Lower lobe of right lung (tissue), 2 donors: ENCODE measurements at regions of chr9 and their contacts with region 1.

Region 1: DNA sequence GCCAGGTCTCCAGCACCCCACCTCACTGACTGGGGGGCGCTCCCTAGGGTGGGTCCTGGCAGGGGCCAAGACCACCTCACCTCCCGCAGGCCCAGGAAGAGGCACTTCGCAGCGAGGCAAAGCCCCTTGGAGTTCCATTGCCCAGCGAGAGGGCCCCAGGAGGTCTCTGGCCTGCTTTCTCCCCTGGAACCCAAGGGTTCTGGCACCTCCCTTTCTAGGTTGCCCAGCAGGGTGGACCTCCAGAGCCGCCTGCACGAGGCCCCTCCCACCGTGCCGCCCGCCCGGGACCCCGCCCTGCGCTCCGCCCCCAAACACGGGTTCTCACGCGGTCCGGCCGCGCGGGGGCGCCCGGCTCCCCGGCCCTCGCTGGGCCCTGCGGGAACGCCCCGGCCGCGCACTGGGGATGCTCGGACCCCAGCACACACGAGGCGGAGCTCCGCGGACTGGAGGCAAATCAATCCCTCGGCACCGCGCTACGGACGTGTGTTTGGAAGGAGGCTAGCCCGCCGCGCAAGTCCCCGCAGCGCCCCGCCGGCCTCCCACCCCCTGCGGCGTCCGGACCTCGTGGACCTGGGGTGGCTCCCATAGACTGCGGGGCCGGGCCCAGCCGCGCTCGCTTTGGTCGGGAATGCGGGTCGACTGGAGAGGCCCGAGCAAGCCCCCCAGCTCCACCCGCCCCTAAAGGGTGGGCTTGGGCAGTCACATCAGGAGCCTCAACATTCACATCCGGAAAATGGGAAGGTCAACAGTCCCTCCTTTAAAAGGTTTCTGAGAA is 99.5 kb upstream of the LMX1B start:
- DNase-seq: peak; percentile 79
- ATAC-seq: peak; percentile 81 to 90
- H3K4me3 ChIP-seq: peak overlapping the region; percentile 19
- H3K27ac ChIP-seq: no peak overlapping the region
- H3K4me1 ChIP-seq: peaks cover 37% of the 10 kb centered on the region
- H3K27me3 ChIP-seq: peaks cover 63% of the 10 kb centered on the region
- CTCF ChIP-seq: peak; percentile 63

Region 2: DNA sequence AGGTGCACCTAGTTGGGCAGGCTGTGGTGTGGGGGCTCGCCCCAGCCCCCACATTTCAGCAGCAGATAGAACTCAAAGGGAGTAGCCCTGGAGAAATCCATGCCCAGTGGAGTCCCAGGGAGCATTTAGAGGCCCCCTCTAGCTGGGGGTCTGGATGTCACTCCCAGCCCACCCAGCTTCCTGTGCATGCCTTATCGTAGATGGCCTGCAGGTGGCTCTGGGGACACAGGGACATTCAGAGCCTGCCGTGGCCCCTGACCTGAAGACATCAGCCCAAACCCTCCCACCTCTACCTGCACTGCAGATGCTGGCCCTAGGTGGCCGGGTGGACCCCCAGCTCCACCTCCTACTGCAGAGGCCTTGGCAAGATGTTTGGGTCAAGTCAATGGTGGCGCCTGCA is 50.5 kb after region 1 on chr9:
- intact Hi-C with region 1: loop called (anchors 10 kb)
- DNase-seq: no peak
- ATAC-seq: no peak
- H3K4me3 ChIP-seq: no peak overlapping the region
- H3K27ac ChIP-seq: no peak overlapping the region
- H3K4me1 ChIP-seq: no peaks in the 10 kb centered on the region
- H3K27me3 ChIP-seq: peaks cover 21% of the 10 kb centered on the region
- CTCF ChIP-seq: no peak

Region 3: DNA sequence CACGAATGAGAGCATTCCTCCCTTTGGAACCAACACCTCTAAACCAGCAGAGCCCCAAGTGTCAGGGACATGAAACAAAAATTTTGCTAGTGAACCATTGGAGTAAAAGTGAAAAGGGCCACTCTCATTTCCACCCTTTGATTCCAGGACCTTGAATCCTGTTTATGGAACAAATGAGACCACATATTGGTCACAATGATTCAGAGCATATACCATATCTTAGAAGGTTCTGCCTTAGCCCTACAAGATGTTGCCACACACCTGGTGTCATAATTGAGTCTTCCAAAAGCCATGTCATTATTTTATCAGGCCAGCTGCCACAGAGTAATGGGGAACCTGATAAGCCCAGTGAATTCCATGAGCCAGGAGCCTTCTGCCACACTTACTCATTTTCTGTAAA is 224.3 kb after region 1 on chr9:
- intact Hi-C with region 1: no loop called
- DNase-seq: no peak
- ATAC-seq: no peak
- H3K4me3 ChIP-seq: no peak overlapping the region
- H3K27ac ChIP-seq: no peak overlapping the region
- H3K4me1 ChIP-seq: no peaks in the 10 kb centered on the region
- H3K27me3 ChIP-seq: no peaks in the 10 kb centered on the region
- CTCF ChIP-seq: no peak